GM12878 (cell line): ENCODE measurements at regions of chr5 and their contacts with region 1.

Region 1: DNA sequence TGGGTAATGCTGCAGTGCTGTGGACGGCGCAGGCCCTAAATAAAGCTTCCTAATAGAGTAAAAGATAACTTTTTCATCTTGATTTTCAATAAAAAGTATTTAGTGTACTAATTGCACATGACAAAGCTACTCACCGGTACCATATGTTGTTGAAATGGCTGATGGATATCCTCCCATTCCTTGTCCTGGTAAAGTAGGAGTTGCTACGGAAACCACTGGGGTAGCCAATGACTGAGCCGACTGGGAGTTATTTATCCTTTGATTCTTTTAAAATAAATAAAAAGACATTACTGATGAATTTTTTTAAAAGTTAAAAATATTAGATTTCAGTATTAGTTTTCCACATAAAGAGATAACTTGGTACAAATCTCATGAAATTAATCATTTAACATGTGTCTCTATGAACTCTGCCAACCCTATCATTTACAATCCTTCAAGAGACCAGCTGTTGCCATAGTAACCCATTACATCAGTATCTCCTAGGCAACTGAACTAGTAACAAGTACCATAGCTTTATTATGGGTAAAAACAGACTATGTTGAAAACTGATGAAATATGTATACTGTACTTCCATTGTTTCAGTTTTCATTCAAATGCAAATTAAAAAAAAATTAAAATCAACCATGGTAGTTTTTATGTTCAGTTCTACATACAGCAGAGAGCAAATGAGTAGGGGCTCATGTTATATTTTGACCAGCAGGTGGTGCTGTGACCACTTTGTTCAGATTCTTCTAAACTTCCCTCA is 153.7 kb downstream of the MEF2C start:
- DNase-seq: peak; percentile 73
- ATAC-seq: peak; percentile 46
- H3K4me3 ChIP-seq: no peak overlapping the region
- H3K27ac ChIP-seq: no peak overlapping the region
- H3K4me1 ChIP-seq: peaks cover 34% of the 10 kb centered on the region
- H3K27me3 ChIP-seq: no peaks in the 10 kb centered on the region
- CTCF ChIP-seq: peak; percentile 54 to 77 (median 58); a peak in 5 of 6 replicates
- EP300 ChIP-seq: no peak
- POLR2A ChIP-seq: no peak
- RAD21 ChIP-seq: peak; percentile 85

Region 2: GRCh38 chr5:88813805-88814575 is 84.7 kb after region 1 on chr5:
- CTCF ChIA-PET with region 1: interaction called, 104 read pairs
- POLR2A ChIA-PET with region 1: interaction called, 10 read pairs
- RAD21 ChIA-PET with region 1: interaction called, 594 read pairs
- SMC1A ChIA-PET with region 1: interaction called, 591 read pairs
- in situ Hi-C with region 1: no loop called
- intact Hi-C with region 1: no loop called
- DNase-seq: no peak
- ATAC-seq: peak; percentile 11; the same call in 2 of the 3 replicates
- H3K4me3 ChIP-seq: 0 out of 2 replicates have a peak overlapping the region, but pooled peaks have one; percentile 10
- H3K27ac ChIP-seq: no peak overlapping the region; the same call in 1 of the 2 replicates
- H3K4me1 ChIP-seq: peaks cover 29% of the 10 kb centered on the region
- H3K27me3 ChIP-seq: no peaks in the 10 kb centered on the region
- CTCF ChIP-seq: no peak
- EP300 ChIP-seq: no peak
- POLR2A ChIP-seq: no peak
- RAD21 ChIP-seq: no peak

Region 3: GRCh38 chr5:88889189-88890069 is 160.2 kb after region 1 on chr5:
- CTCF ChIA-PET with region 1: interaction called, 24 read pairs
- POLR2A ChIA-PET with region 1: interaction called, 6 read pairs
- RAD21 ChIA-PET with region 1: interaction called, 99 read pairs
- SMC1A ChIA-PET with region 1: interaction called, 76 read pairs
- in situ Hi-C with region 1: no loop called
- intact Hi-C with region 1: no loop called
- DNase-seq: no peak
- ATAC-seq: peak; percentile 56
- H3K4me3 ChIP-seq: peak overlapping the region; percentile 87
- H3K27ac ChIP-seq: peak overlapping the region; percentile 98
- H3K4me1 ChIP-seq: peaks cover 3% of the 10 kb centered on the region
- H3K27me3 ChIP-seq: no peaks in the 10 kb centered on the region
- CTCF ChIP-seq: no peak
- EP300 ChIP-seq: no peak
- POLR2A ChIP-seq: peak; percentile 92
- RAD21 ChIP-seq: peak; percentile 2; the same call in 1 of the 2 replicates

Region 4: GRCh38 chr5:89268460-89268859 is 539.2 kb after region 1 on chr5:
- CTCF ChIA-PET with region 1: interaction called, 10 read pairs
- POLR2A ChIA-PET with region 1: interaction called, 4 read pairs
- RAD21 ChIA-PET with region 1: interaction called, 21 read pairs
- SMC1A ChIA-PET with region 1: interaction called, 12 read pairs
- in situ Hi-C with region 1: loop called (anchors 10 kb)
- intact Hi-C with region 1: no loop called
- DNase-seq: peak; percentile 51
- ATAC-seq: peak; percentile 38
- H3K4me3 ChIP-seq: no peak overlapping the region
- H3K27ac ChIP-seq: peak overlapping the region; percentile 43; the same call in 1 of the 2 replicates
- H3K4me1 ChIP-seq: peaks cover 46% of the 10 kb centered on the region
- H3K27me3 ChIP-seq: no peaks in the 10 kb centered on the region
- CTCF ChIP-seq: no peak
- EP300 ChIP-seq: no peak
- POLR2A ChIP-seq: no peak
- RAD21 ChIP-seq: 0 out of 2 replicates have a peak, but pooled peaks have one; percentile 12

Region 5: GRCh38 chr5:89582768-89583339 is 853.6 kb after region 1 on chr5:
- CTCF ChIA-PET with region 1: no interaction called
- POLR2A ChIA-PET with region 1: no interaction called
- RAD21 ChIA-PET with region 1: interaction called, 3 read pairs
- SMC1A ChIA-PET with region 1: interaction called, 10 read pairs
- in situ Hi-C with region 1: no loop called
- intact Hi-C with region 1: no loop called
- DNase-seq: no peak
- ATAC-seq: no peak
- H3K4me3 ChIP-seq: no peak overlapping the region
- H3K27ac ChIP-seq: no peak overlapping the region
- H3K4me1 ChIP-seq: no peaks in the 10 kb centered on the region
- H3K27me3 ChIP-seq: no peaks in the 10 kb centered on the region
- CTCF ChIP-seq: no peak
- EP300 ChIP-seq: no peak
- POLR2A ChIP-seq: no peak
- RAD21 ChIP-seq: no peak

Region 6: GRCh38 chr5:90184764-90185163 is 1455.5 kb after region 1 on chr5:
- CTCF ChIA-PET with region 1: interaction called, 4 read pairs
- POLR2A ChIA-PET with region 1: no interaction called
- RAD21 ChIA-PET with region 1: interaction called, 3 read pairs
- SMC1A ChIA-PET with region 1: interaction called, 6 read pairs
- in situ Hi-C with region 1: no loop called
- intact Hi-C with region 1: loop called (anchors 5 kb)
- DNase-seq: no peak
- ATAC-seq: no peak
- H3K4me3 ChIP-seq: no peak overlapping the region
- H3K27ac ChIP-seq: no peak overlapping the region
- H3K4me1 ChIP-seq: no peaks in the 10 kb centered on the region
- H3K27me3 ChIP-seq: no peaks in the 10 kb centered on the region
- CTCF ChIP-seq: no peak
- EP300 ChIP-seq: no peak
- POLR2A ChIP-seq: no peak
- RAD21 ChIP-seq: no peak